GM10248 (cell line): ENCODE measurements at regions of chrX and their contacts with region 1.

Region 1: GRCh38 chrX:38327007-38327774 is at the start of gene RPGR:
- DNase-seq: peak; percentile 90
- CTCF ChIP-seq: peak; percentile 73

Region 2: GRCh38 chrX:37712458-37712857 is 614.7 kb before region 1 on chrX:
- CTCF ChIA-PET with region 1: no interaction called
- POLR2A ChIA-PET with region 1: no interaction called
- DNase-seq: no peak
- CTCF ChIP-seq: no peak

Region 3: GRCh38 chrX:38192007-38192810 is 135.0 kb before region 1 on chrX:
- CTCF ChIA-PET with region 1: interaction called, 17 read pairs
- POLR2A ChIA-PET with region 1: no interaction called
- DNase-seq: no peak
- CTCF ChIP-seq: no peak

Region 4: GRCh38 chrX:38220024-38220414 is 107.2 kb before region 1 on chrX:
- CTCF ChIA-PET with region 1: interaction called, 12 read pairs
- POLR2A ChIA-PET with region 1: no interaction called
- DNase-seq: peak; percentile 20
- CTCF ChIP-seq: no peak

Region 5: DNA sequence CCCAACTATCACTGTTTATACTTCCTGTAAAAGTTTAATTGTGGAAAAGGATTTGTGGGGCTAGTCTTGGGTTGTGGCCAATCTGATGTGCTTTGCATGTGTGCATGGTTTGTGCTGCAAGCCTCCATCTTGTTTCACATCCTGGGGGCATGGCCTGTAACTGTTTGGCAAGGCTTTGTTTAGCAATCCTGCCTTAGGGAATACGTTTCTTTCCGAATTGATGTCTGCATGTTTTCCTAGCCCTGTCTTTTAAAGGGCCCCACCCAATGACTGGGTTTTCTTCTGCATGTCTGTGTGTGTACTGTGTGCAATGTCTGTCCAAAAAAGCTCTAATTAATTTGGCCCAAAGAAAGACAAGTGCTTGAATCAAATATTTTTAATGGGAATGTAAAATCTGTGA is 399.4 kb after region 1 on chrX:
- CTCF ChIA-PET with region 1: no interaction called
- POLR2A ChIA-PET with region 1: no interaction called
- DNase-seq: no peak
- CTCF ChIP-seq: no peak